Caco-2 (cell line): ENCODE measurements at regions of chr3 and their contacts with region 1.

Region 1: GRCh38 chr3:8769088-8769822 is at the start of gene OXTR:
- DNase-seq: peak; percentile 59 to 87
- H3K4me3 ChIP-seq: peak within 1 kb of the TSS; percentile 44
- H3K4me3 Mint-ChIP-seq: peak within 1 kb of the TSS; percentile 71
- H3K27ac Mint-ChIP-seq: no peak within 1 kb of the TSS
- H3K4me1 ChIP-seq: peaks cover 9% of the 10 kb centered on the region; the same call in 1 of the 2 replicates
- H3K4me1 Mint-ChIP-seq: peaks cover 6% of the 10 kb centered on the region
- H3K27me3 ChIP-seq: no peaks in the 10 kb centered on the region; the same call in 1 of the 2 replicates
- H3K27me3 Mint-ChIP-seq: peaks cover 8% of the 10 kb centered on the region
- CTCF ChIP-seq: peak; percentile 95 to 96
- total RNA-seq, gene OXTR: 3.9 and 4.6 TPM in 2 replicates

Region 2: GRCh38 chr3:8441969-8442559 is 327.2 kb before region 1 on chr3:
- CTCF ChIA-PET with region 1: no interaction called
- POLR2A ChIA-PET with region 1: no interaction called
- intact Hi-C with region 1: loop called (anchors 10 kb)
- DNase-seq: peak; percentile 70 to 71
- H3K4me3 ChIP-seq: no peak overlapping the region
- H3K4me3 Mint-ChIP-seq: no peak overlapping the region
- H3K27ac Mint-ChIP-seq: no peak overlapping the region
- H3K4me1 ChIP-seq: peaks cover 33% of the 10 kb centered on the region
- H3K4me1 Mint-ChIP-seq: peaks cover 7% of the 10 kb centered on the region
- H3K27me3 ChIP-seq: no peaks in the 10 kb centered on the region
- H3K27me3 Mint-ChIP-seq: no peaks in the 10 kb centered on the region
- CTCF ChIP-seq: peak; percentile 67 to 69

Region 3: GRCh38 chr3:8663177-8664061 is 105.8 kb before region 1 on chr3:
- CTCF ChIA-PET with region 1: interaction called, 14 read pairs
- POLR2A ChIA-PET with region 1: no interaction called
- intact Hi-C with region 1: loop called (anchors 1 kb)
- DNase-seq: peak; percentile 87 to 90
- H3K4me3 ChIP-seq: no peak overlapping the region
- H3K4me3 Mint-ChIP-seq: no peak overlapping the region
- H3K27ac Mint-ChIP-seq: no peak overlapping the region
- H3K4me1 ChIP-seq: peaks cover 59% of the 10 kb centered on the region
- H3K4me1 Mint-ChIP-seq: peaks cover 35% of the 10 kb centered on the region
- H3K27me3 ChIP-seq: no peaks in the 10 kb centered on the region
- H3K27me3 Mint-ChIP-seq: no peaks in the 10 kb centered on the region
- CTCF ChIP-seq: peak; percentile 44 to 80

Region 4: DNA sequence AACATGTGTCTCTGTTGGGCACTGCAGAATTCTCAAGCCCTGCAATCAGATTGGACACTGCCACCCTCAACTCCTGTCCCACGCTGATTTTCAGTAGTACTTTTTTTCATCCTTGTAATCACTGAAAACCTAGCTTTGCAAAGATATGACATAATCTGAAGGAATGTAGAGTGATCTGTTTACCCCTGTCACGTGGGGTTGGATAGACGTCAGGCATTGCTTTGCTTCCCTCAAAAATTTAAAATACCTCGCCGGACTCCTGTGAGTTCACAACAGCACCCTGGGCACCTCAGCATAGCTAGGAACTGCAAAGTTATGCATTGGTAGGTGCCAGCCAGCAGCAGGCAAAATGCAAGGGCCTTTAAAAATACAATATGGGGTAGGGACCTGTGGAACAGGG is 71.3 kb after region 1 on chr3:
- CTCF ChIA-PET with region 1: interaction called, 3 read pairs
- POLR2A ChIA-PET with region 1: no interaction called
- intact Hi-C with region 1: loop called (anchors 2 kb)
- DNase-seq: peak in 1 of 2 experiments; percentile 32
- H3K4me3 ChIP-seq: no peak overlapping the region
- H3K4me3 Mint-ChIP-seq: no peak overlapping the region
- H3K27ac Mint-ChIP-seq: no peak overlapping the region
- H3K4me1 ChIP-seq: peaks cover 16% of the 10 kb centered on the region
- H3K4me1 Mint-ChIP-seq: peaks cover 6% of the 10 kb centered on the region
- H3K27me3 ChIP-seq: no peaks in the 10 kb centered on the region
- H3K27me3 Mint-ChIP-seq: no peaks in the 10 kb centered on the region
- CTCF ChIP-seq: no peak

Region 5: DNA sequence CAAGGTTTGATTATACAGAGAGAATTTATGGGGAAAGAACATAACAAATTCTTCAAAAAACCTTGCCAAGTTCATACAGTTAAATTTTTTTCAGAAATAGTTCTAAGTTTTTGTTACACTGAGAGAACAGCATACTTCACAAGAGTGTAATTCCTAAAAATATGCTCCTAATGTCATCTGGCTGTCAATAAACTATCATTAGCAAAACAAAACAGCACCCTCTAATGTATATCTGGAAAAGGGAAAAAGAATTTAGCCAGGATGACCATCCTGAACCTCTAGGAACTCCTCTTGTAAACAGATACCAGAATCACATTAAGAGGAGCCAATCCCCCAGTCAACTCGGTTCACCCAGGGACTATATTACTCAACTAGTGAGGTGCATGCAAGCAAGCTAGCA is 130.7 kb after region 1 on chr3:
- CTCF ChIA-PET with region 1: no interaction called
- POLR2A ChIA-PET with region 1: no interaction called
- intact Hi-C with region 1: loop called (anchors 5 kb)
- DNase-seq: no peak
- H3K4me3 ChIP-seq: no peak overlapping the region
- H3K4me3 Mint-ChIP-seq: no peak overlapping the region
- H3K27ac Mint-ChIP-seq: no peak overlapping the region
- H3K4me1 ChIP-seq: no peaks in the 10 kb centered on the region
- H3K4me1 Mint-ChIP-seq: no peaks in the 10 kb centered on the region
- H3K27me3 ChIP-seq: no peaks in the 10 kb centered on the region
- H3K27me3 Mint-ChIP-seq: no peaks in the 10 kb centered on the region
- CTCF ChIP-seq: no peak